Ascending aorta (tissue), 2 donors: ENCODE measurements at regions of chr20 and their contacts with region 1.

Region 1: DNA sequence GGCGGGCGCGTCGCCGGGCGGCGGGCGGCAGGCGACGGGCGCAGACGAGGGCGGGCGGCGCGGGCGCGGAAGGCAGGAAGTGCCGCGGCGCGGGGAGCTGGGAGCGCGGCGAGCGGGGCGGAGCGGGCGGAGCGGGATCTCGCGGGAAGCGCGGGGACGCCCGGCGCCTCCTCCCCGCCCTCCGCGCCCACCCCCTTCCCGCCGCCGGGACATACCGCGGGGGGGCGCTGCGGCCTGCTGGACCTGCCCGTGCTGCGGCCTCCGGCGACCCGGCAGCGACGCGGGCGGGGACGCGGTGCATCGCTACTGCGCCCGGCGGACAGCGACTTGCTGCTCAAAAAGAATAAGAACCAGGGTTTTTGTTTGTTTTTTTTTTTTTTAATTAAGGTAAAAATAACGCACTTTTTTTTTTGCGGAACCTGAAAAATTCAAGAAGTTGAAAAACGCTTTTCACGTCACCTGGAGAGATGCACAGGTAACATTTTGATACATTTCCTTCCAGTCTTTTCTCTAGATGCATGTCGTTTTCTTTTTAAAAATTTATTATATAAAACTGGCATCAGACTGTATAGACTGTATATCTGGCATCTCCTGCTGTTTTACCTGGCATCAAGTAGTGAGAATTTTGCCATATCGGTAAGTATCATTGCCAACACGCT is at the start of gene CENPB:
- DNase-seq: peak; percentile 47 to 93
- H3K4me3 ChIP-seq: peak within 1 kb of the TSS; percentile 67 to 94
- H3K27ac ChIP-seq: peak within 1 kb of the TSS; percentile 82 to 89
- H3K4me1 ChIP-seq: peaks cover 20 to 25% of the 10 kb centered on the region in 2 donors
- H3K27me3 ChIP-seq: no peaks in the 10 kb centered on the region
- CTCF ChIP-seq: peak; percentile 63 to 73 (median 68)
- total RNA-seq, gene CENPB: 173 TPM

Region 2: GRCh38 chr20:3767427-3768341 is 19.1 kb before region 1 on chr20 and contains the start of gene ADISSP:
- intact Hi-C with region 1: loop called (anchors 1 kb)
- DNase-seq: peak; percentile 95 to 99
- H3K4me3 ChIP-seq: peak within 1 kb of the TSS; percentile 78
- H3K27ac ChIP-seq: peak within 1 kb of the TSS; percentile 85 to 87
- H3K4me1 ChIP-seq: peaks cover 5 to 11% of the 10 kb centered on the region in 2 donors
- H3K27me3 ChIP-seq: no peaks in the 10 kb centered on the region
- CTCF ChIP-seq: peak in 1 of 3 experiments; percentile 7
- total RNA-seq, gene ADISSP: 48.4 TPM

Region 3: DNA sequence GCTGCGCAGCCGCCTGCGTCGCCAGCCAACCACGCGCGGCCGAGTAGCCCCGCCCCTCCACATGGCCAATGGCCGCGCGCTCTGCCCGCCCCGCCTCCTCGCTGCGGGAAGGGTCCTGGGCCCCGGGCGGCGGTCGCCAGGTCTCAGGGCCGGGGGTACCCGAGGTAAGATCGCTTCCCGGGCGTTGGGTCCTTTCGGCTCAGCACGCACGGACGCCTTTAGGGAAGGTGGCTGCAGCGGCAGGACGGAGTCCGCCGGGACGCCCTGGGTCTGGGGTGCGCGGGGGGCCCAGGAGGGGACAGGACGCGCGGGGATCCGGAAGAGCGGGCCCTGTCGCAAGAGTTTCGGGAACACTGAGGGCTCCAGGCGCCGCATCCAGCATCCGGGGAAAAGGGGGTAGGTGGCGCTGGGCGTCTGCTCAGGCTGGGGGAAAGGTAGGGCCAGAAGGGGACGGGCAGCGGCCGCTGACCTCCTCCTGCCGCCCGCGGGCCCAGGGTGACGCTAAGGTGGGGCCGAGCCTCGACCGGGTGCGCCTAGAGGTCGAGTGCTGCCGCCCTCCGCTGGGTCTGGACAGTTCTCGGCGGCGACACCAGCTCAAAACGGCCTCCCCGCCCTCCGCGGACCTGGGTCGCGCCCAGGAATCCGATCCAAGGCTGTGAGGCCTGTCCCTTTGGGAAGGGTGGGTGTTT is 60.1 kb after region 1 on chr20 and contains the start of gene MAVS:
- intact Hi-C with region 1: loop called (anchors 2 kb)
- DNase-seq: peak; percentile 35 to 91
- H3K4me3 ChIP-seq: peak within 1 kb of the TSS; percentile 89 to 98
- H3K27ac ChIP-seq: peak within 1 kb of the TSS; percentile 93 to 94
- H3K4me1 ChIP-seq: peaks cover 6 to 15% of the 10 kb centered on the region in 2 donors
- H3K27me3 ChIP-seq: no peaks in the 10 kb centered on the region
- CTCF ChIP-seq: no peak
- total RNA-seq, gene MAVS: 35.2 TPM

Region 4: GRCh38 chr20:4171538-4172116 is 384.8 kb after region 1 on chr20:
- intact Hi-C with region 1: loop called (anchors 2 kb)
- DNase-seq: no peak
- H3K4me3 ChIP-seq: peak overlapping the region; percentile 50 to 72
- H3K27ac ChIP-seq: peak overlapping the region; percentile 86 to 88
- H3K4me1 ChIP-seq: peaks cover 5 to 14% of the 10 kb centered on the region in 2 donors
- H3K27me3 ChIP-seq: no peaks in the 10 kb centered on the region
- CTCF ChIP-seq: no peak